Ovary (tissue), 10 donors: ENCODE measurements at regions of chr5 and their contacts with region 1.

Region 1: GRCh38 chr5:15821506-15821905 is 321.5 kb downstream of the FBXL7 start:
- DNase-seq: no peak
- H3K4me3 ChIP-seq: no peak overlapping the region
- H3K27ac ChIP-seq: no peak overlapping the region
- H3K4me1 ChIP-seq: no peaks in the 10 kb centered on the region
- H3K27me3 ChIP-seq: no peaks in the 10 kb centered on the region
- CTCF ChIP-seq: no peak
- EP300 ChIP-seq: no peak
- POLR2A ChIP-seq: no peak

Region 2: DNA sequence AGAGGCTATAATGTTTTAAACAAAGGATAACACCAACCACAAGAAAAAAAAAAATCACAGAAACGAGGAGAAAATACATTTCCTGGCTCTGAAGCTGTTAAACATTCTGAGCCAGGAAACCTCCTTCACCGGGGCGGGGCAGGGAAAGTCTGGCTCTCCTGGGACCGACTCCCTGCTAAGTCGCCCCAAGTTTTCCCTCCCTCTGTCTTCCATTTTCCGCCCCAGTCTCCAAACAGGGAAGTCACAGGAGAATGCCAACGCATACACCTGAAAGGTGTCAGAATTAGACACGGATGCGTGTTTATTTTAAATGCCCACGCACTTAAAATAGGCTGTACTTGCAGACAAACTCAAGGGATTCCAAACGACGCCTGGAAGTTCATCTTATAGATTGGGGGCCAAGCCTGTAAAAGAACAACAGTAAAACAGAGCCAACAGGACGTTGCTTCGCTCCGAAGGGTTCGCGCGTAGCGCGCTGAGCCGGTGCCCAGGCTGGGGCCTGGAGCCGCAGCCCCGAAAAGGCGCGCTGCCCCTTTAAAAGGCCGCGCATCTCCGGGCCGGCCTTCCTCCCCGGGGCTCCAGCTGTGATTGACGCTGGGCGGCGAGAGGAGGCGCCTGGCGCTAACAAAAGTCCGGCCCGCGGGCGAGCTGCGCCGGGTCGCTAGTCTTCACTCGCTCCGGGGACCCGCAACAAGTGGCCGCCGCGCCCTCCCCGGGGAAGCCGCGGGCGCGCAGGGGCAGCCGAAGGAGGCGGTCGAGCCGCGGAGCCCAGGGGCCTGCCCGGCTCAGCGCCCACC is 321.8 kb before region 1 on chr5 and contains the start of gene FBXL7:
- intact Hi-C with region 1: loop called in 1 of 4 experiments (anchors 10 kb)
- DNase-seq: peak; percentile 81 to 88 (median 84)
- H3K4me3 ChIP-seq: peak within 1 kb of the TSS; percentile 81
- H3K27ac ChIP-seq: peak within 1 kb of the TSS; percentile 71 to 86
- H3K4me1 ChIP-seq: peaks cover 10% of the 10 kb centered on the region
- H3K27me3 ChIP-seq: no peaks in the 10 kb centered on the region
- CTCF ChIP-seq: peak in 1 of 3 donors; percentile 25
- EP300 ChIP-seq: no peak
- POLR2A ChIP-seq: no peak
- total RNA-seq, gene FBXL7: 25.2 to 37.2 (median 29.2) TPM

Region 3: DNA sequence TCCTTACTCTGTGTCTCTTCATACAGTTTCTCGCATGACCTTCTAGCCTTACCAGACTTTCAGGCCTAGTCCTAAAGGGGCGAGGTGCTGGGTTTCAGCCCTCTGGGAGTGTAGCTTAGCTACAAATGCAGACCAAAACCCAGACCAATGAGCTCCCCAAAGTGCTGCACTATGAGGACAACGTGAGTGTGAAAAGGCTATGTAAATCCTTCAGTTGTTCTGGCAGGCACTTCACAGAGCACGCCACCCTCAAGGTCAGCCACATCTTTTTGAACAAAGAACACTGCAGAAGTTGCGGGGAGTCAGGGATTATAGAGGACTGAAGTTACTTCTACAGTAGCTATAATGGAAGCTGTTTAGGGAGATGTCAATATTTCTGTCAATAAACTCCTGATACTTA is 56.4 kb after region 1 on chr5:
- intact Hi-C with region 1: no loop called
- DNase-seq: no peak
- H3K4me3 ChIP-seq: no peak overlapping the region
- H3K27ac ChIP-seq: no peak overlapping the region
- H3K4me1 ChIP-seq: no peaks in the 10 kb centered on the region
- H3K27me3 ChIP-seq: no peaks in the 10 kb centered on the region
- CTCF ChIP-seq: no peak
- EP300 ChIP-seq: no peak
- POLR2A ChIP-seq: no peak